ENCODE measurements at regions of chr14 and their contacts with region 1.

Region 1: DNA sequence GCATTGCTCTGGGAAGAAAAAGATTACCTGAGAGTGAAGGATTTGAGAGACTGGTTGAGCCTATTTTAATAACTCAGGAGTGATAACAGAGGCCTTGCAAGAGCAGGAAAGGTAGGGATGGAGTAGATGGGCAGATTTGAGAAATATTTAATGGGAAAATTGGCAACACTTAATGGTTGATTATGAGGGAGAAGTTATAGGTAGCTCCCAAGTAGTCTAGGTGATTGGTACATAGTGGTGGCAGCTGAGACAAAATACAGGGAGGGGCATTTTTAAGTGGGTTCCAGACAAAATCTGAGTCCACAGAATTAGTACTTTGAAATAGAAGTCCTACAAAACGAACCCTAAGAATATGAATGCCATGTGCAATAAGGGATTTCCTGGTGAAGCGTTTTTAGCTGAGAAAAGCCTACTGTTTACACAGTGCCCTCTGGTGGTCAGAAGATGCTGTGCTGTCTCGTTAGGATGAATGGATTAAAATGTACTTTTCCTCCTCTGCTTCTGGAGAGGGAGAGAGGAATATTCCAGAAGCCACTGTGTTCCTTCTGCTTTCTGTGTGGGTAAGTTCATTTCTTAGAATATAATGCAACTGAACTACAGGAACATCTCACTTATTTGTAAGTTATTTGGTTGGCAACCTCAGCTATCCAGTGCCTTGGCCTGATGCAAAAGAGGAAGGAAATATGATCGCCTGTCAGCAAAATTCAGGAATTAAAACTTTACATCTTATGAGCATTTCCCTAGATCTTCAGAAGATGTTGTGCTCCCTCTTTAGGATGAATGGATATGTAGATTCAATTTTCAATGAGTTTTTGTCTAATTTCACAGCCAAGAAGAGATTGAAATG is 6.5 kb downstream of the ZBTB1 start:
- DNase-seq: peak; percentile 79
- H3K4me3 Mint-ChIP-seq: no peak overlapping the region
- H3K27ac Mint-ChIP-seq: peak overlapping the region; percentile 13
- H3K4me1 Mint-ChIP-seq: peaks cover 62% of the 10 kb centered on the region
- H3K27me3 Mint-ChIP-seq: no peaks in the 10 kb centered on the region

Region 2: DNA sequence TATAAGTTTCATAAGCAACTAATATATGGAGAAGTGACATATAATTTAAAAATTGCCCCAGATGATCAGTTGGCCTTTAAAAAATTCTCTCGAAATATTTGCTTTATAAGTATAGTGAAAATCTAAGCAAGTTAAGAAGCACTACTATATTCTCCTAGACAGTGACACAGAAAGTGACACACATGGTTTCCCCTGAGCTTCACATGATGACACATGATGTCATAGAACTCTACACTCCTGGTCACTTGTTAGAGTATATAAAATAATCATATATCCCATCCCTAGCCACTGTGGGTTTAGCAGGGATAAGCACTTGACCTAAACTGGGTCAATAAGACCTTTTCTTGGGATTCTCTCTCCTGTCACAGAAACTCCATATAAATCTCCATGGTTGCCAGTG is 165.5 kb before region 1 on chr14:
- CTCF ChIA-PET with region 1: interaction called, 11 read pairs
- DNase-seq: no peak
- H3K4me3 Mint-ChIP-seq: no peak overlapping the region
- H3K27ac Mint-ChIP-seq: no peak overlapping the region
- H3K4me1 Mint-ChIP-seq: peaks cover 6% of the 10 kb centered on the region
- H3K27me3 Mint-ChIP-seq: peaks cover 3% of the 10 kb centered on the region

Region 3: DNA sequence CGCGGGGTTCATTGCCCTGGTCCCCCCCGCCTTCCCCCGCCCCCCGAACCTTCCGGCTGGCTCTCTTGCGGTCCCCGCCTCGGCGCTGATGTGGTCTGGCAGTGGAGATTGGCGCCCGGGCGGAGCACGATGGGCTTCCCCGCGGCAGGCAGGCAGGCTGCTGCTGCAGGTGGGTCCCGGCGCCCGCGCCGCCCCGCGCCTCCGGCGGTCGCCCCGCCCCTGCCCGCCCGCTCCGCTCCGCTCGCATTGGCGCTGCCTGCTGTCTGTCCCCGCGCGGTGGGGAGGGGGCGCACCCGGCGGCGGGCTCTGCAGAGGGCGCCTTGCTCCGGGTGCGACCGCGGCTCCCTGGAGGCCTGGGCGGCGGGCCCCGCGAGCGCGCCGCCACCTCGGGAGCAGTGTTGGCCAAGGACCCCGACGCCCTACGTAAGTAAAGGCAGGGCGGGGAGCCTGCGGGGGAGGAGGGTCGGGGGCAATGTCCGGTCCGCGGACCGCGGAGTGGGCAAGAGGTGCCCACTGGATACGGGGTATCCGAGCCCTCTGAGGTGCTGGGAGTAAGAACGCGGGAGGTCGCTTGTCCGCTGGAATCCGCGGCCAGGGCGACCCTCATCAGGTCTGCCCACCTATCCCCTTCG is 45.7 kb before region 1 on chr14 and contains the start of gene AKAP5:
- CTCF ChIA-PET with region 1: interaction called, 10 read pairs
- DNase-seq: peak; percentile 76
- H3K4me3 Mint-ChIP-seq: peak within 1 kb of the TSS; percentile 87
- H3K27ac Mint-ChIP-seq: peak within 1 kb of the TSS; percentile 77
- H3K4me1 Mint-ChIP-seq: peaks cover 21% of the 10 kb centered on the region
- H3K27me3 Mint-ChIP-seq: no peaks in the 10 kb centered on the region

Region 4: GRCh38 chr14:64496764-64497163 is 14.3 kb before region 1 on chr14:
- CTCF ChIA-PET with region 1: interaction called, 15 read pairs
- DNase-seq: no peak
- H3K4me3 Mint-ChIP-seq: no peak overlapping the region
- H3K27ac Mint-ChIP-seq: no peak overlapping the region
- H3K4me1 Mint-ChIP-seq: peaks cover 55% of the 10 kb centered on the region
- H3K27me3 Mint-ChIP-seq: no peaks in the 10 kb centered on the region

Region 5: GRCh38 chr14:64696355-64696857 is 185.4 kb after region 1 on chr14:
- CTCF ChIA-PET with region 1: no interaction called
- DNase-seq: peak; percentile 30
- H3K4me3 Mint-ChIP-seq: no peak overlapping the region
- H3K27ac Mint-ChIP-seq: no peak overlapping the region
- H3K4me1 Mint-ChIP-seq: peaks cover 49% of the 10 kb centered on the region
- H3K27me3 Mint-ChIP-seq: peaks cover 75% of the 10 kb centered on the region

Measured in activated naive CD4-positive, alpha-beta T cell treated with anti-CD3 and anti-CD28 coated beads, Interleukin-2, amount 10 ng/mL, durations not matched to agents 7 days and 5 days (primary cell).